ENCODE measurements at regions of chr2 and their contacts with region 1.

Region 1: GRCh38 chr2:207746131-207746530 is 23.6 kb downstream of the FZD5 start:
- DNase-seq: peak; percentile 54 to 74 (median 67)
- H3K4me3 ChIP-seq: no peak overlapping the region
- H3K4me3 Mint-ChIP-seq: no peak overlapping the region
- H3K27ac ChIP-seq: no peak overlapping the region
- H3K27ac Mint-ChIP-seq: no peak overlapping the region
- H3K4me1 ChIP-seq: no peaks in the 10 kb centered on the region
- H3K4me1 Mint-ChIP-seq: no peaks in the 10 kb centered on the region
- H3K27me3 ChIP-seq: no peaks in the 10 kb centered on the region
- H3K27me3 Mint-ChIP-seq: no peaks in the 10 kb centered on the region
- CTCF ChIP-seq: peak; percentile 89

Region 2: GRCh38 chr2:207782238-207783030 is 36.3 kb after region 1 on chr2:
- intact Hi-C with region 1: no loop called
- DNase-seq: no peak
- H3K4me3 ChIP-seq: no peak overlapping the region
- H3K4me3 Mint-ChIP-seq: no peak overlapping the region
- H3K27ac ChIP-seq: no peak overlapping the region
- H3K27ac Mint-ChIP-seq: no peak overlapping the region
- H3K4me1 ChIP-seq: peaks cover 21 to 28% of the 10 kb centered on the region in 2 donors
- H3K4me1 Mint-ChIP-seq: peaks cover 27% of the 10 kb centered on the region
- H3K27me3 ChIP-seq: no peaks in the 10 kb centered on the region
- H3K27me3 Mint-ChIP-seq: peaks cover 0 to 1% (median 0%) of the 10 kb centered on the region in 3 donors
- CTCF ChIP-seq: no peak

Region 3: GRCh38 chr2:207854484-207855440 is 108.6 kb after region 1 on chr2:
- intact Hi-C with region 1: no loop called
- DNase-seq: no peak
- H3K4me3 ChIP-seq: no peak overlapping the region
- H3K4me3 Mint-ChIP-seq: no peak overlapping the region
- H3K27ac ChIP-seq: no peak overlapping the region
- H3K27ac Mint-ChIP-seq: no peak overlapping the region
- H3K4me1 ChIP-seq: no peaks in the 10 kb centered on the region
- H3K4me1 Mint-ChIP-seq: no peaks in the 10 kb centered on the region
- H3K27me3 ChIP-seq: no peaks in the 10 kb centered on the region
- H3K27me3 Mint-ChIP-seq: no peaks in the 10 kb centered on the region
- CTCF ChIP-seq: no peak

Region 4: DNA sequence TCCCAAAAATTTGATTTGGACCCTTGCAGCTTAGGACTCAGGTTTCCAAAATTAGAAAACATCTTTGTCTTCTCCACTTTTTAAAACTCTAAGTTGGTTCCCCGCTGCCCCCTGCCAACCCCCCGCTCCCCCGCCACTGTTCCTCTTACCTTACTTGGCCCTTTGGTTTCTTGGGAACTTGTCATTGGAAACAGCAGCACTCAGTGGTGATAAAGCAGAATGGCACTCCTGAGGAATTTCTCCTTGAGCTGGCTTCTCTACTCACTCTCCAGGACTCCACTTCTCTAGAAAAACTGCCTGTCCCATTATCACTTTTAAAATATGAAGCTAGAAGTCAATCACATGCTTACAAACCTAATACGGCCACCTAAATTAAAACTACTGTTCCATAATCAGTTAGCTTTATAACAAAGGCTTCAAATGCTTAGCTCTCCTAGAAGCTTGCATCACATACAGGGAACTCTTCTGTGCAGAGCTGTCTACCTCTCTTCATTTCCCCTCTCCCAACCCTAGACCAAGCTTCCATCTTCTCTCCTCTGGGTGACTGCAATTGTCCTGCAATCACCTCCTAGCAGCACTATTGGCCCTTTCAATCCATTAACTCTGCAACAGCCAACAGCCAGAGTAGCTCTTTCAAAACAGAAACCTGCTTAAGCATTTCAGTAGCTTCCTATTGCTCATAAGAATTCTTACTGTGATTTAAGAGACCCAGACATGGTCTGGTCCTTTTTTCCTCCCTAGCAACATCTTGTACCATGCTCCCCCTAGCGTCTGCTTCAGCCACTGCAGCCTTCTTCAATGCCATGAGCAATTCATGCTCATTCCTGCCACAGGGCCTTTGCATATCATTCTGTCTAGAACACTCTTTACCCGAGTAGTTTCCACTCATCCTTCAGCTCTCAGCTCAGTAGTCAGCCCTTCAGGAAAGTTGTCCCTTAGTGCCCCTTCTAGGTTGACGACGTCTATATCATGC is 294.4 kb after region 1 on chr2:
- intact Hi-C with region 1: loop called (anchors 2 to 10 kb)
- DNase-seq: peak; percentile 54 to 76 (median 69)
- H3K4me3 ChIP-seq: no peak overlapping the region
- H3K4me3 Mint-ChIP-seq: no peak overlapping the region
- H3K27ac ChIP-seq: no peak overlapping the region
- H3K27ac Mint-ChIP-seq: peak overlapping the region in 2 of 7 donors; percentile 7 to 43
- H3K4me1 ChIP-seq: no peaks in the 10 kb centered on the region
- H3K4me1 Mint-ChIP-seq: peaks cover 8% of the 10 kb centered on the region
- H3K27me3 ChIP-seq: no peaks in the 10 kb centered on the region
- H3K27me3 Mint-ChIP-seq: no peaks in the 10 kb centered on the region
- CTCF ChIP-seq: peak; percentile 75

Region 5: DNA sequence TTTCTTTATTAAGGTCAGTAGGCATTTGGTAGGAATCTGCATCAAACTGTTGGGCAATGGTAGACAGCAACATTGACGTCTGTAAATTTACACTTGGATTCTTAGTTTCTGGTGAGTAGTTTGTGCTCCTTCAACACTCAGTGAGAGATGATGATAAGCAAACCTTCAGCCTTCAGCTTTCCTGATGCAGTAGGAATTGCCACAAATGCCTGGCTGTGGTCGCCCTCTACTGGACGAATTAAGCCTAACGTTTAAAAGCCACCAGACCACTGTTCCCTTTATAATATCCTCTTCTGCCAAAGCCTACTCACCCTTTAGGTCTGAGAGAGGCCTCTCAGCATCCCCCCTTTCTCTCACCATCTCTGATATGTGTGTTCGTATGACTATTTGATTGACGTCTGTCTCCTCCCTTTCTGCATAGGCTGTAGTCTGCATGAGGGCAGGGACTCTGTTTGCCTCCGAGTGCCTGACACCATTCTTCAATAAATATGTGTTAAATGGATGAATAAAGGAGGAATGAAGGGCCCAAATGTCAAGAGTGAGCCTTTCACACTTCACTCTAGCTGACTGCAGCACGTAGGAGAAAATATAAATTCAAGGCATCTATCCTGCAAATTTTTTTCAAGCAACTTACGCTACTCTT is 326.2 kb after region 1 on chr2:
- intact Hi-C with region 1: loop called (anchors 1 to 5 kb)
- DNase-seq: peak; percentile 41 to 60 (median 54)
- H3K4me3 ChIP-seq: no peak overlapping the region
- H3K4me3 Mint-ChIP-seq: no peak overlapping the region
- H3K27ac ChIP-seq: no peak overlapping the region
- H3K27ac Mint-ChIP-seq: peak overlapping the region in 1 of 7 donors; percentile 7
- H3K4me1 ChIP-seq: peaks cover 0 to 4% of the 10 kb centered on the region in 2 donors
- H3K4me1 Mint-ChIP-seq: peaks cover 5% of the 10 kb centered on the region
- H3K27me3 ChIP-seq: no peaks in the 10 kb centered on the region
- H3K27me3 Mint-ChIP-seq: peaks cover 0 to 2% (median 0%) of the 10 kb centered on the region in 3 donors
- CTCF ChIP-seq: peak; percentile 83